Activated naive CD4-positive, alpha-beta T cell treated with anti-CD3 and anti-CD28 coated beads for 36 hours (primary cell): ENCODE measurements at regions of chr12 and their contacts with region 1.

Region 1: DNA sequence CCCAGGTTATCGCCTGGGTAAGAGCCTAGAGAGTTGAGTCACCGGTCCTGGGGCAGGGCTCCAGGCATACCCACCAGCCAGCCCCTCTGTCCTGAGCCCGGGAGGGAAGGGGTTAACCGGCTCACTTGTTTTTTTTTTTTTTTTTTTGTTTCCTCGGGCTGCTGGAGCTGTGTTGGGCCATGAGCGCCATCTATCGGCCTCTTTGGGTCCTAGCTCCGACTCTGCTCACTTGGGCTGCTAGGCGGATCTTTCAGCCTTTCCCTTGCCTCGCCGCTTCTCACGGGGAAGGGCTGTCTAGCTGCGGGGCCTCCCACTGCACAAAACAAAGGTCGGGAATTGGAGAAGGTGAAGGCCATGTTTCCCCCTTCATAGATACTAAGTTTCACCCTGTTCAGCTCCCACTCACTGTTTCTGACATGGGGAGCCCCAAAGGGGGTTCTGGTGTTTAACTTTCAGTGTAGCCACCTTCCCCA is 2.8 kb upstream of the SMUG1 start:
- DNase-seq: peak; percentile 84
- H3K4me3 Mint-ChIP-seq: no peak overlapping the region
- H3K27ac Mint-ChIP-seq: no peak overlapping the region
- H3K4me1 Mint-ChIP-seq: peaks cover 16% of the 10 kb centered on the region
- H3K27me3 Mint-ChIP-seq: peaks cover 35% of the 10 kb centered on the region

Region 2: GRCh38 chr12:53727310-53728041 is 464.1 kb before region 1 on chr12 and contains the start of gene CALCOCO1:
- CTCF ChIA-PET with region 1: no interaction called
- intact Hi-C with region 1: loop called (anchors 1 kb)
- DNase-seq: peak; percentile 99
- H3K4me3 Mint-ChIP-seq: peak within 1 kb of the TSS; percentile 92
- H3K27ac Mint-ChIP-seq: peak within 1 kb of the TSS; percentile 87
- H3K4me1 Mint-ChIP-seq: peaks cover 16% of the 10 kb centered on the region
- H3K27me3 Mint-ChIP-seq: no peaks in the 10 kb centered on the region
- total RNA-seq, gene CALCOCO1: 8.1 to 8.3 TPM

Region 3: DNA sequence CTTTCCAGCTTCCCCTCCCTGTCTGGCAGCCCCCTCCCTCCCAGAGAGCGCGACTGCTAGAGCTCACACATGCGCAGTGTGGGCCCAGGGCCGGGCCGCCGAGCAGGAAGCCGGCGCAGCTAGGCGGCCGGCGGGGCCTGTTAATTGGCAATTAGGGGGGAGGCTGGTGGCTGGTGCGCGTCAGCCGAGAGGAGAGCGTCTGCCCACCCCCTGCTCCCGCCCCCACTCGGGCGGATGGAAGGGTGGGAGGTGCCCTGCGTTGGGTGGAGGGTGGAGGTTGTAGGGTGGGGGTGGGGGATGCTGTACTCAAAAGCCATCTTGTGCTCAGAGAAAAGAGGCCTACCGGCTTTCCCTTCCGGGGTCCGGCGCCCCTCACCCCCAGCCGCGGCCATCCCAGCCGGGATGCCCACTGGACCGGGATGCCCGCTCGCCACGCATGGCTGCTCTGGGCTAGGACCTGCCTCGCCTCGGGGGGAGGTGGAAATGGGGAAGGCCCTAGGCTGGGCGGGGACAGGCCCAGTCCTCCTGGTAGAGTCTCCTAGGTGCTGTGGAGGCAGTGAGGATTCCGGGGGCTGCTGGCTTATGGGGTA is 173.6 kb before region 1 on chr12:
- CTCF ChIA-PET with region 1: interaction called, 12 read pairs
- intact Hi-C with region 1: no loop called
- DNase-seq: peak; percentile 79
- H3K4me3 Mint-ChIP-seq: peak overlapping the region; percentile 76
- H3K27ac Mint-ChIP-seq: no peak overlapping the region
- H3K4me1 Mint-ChIP-seq: peaks cover 26% of the 10 kb centered on the region
- H3K27me3 Mint-ChIP-seq: peaks cover 78% of the 10 kb centered on the region

Region 4: GRCh38 chr12:54207484-54208294 is 16.1 kb after region 1 on chr12:
- CTCF ChIA-PET with region 1: interaction called, 47 read pairs
- intact Hi-C with region 1: loop called (anchors 2 kb)
- DNase-seq: peak; percentile 88
- H3K4me3 Mint-ChIP-seq: no peak overlapping the region
- H3K27ac Mint-ChIP-seq: no peak overlapping the region
- H3K4me1 Mint-ChIP-seq: no peaks in the 10 kb centered on the region
- H3K27me3 Mint-ChIP-seq: peaks cover 9% of the 10 kb centered on the region